ENCODE measurements at regions of chr14 and their contacts with region 1.

Region 1: DNA sequence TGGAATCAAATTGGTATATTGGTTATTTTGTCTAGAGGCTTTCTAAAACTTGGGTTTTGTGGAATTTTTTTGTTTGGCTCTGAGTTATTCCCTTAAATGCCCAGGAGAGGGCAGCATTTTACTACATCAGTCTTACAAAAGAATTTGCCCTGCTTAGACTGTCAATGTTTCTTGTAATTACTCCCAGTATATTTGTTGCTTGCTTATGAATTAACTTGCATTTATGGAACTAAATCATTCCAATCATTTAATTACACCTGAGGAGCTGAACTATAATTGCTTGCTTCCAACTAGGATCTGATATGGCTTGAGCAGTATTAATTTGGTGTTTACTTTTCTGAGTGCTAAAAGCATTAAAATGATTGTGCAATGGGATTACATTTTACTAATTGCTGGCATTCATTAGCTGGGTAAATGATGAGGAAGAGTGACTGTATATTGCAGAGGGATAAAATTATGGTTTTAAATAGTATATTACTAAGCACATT is 48.7 kb downstream of the MIPOL1 start:
- DNase-seq: peak; percentile 79
- ATAC-seq: peak; percentile 65
- H3K4me3 ChIP-seq: no peak overlapping the region
- H3K27ac ChIP-seq: no peak overlapping the region
- H3K4me1 ChIP-seq: no peaks in the 10 kb centered on the region; the same call in 1 of the 2 replicates
- H3K27me3 ChIP-seq: no peaks in the 10 kb centered on the region
- CTCF ChIP-seq: peak; percentile 89

Region 2: DNA sequence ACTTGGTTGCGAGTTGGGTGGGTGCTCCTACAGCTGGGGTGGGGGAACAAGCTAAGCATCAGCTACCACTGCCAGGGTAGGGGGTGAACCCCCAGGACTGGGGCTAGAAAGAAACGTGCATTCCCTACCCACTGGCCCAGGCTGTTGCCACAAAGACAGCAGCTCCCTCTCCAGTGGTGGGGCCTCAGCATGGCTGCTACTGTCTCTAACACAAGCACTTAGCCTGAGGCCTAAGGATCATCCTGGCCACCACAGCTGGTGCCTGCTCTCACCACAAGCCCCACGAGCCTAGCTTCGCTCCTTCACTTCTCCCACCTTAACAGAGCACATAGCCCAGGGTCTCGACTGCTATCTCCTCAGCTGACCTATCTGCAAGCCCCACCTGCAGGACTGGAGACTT is 93.0 kb before region 1 on chr14:
- CTCF ChIA-PET with region 1: no interaction called
- POLR2A ChIA-PET with region 1: no interaction called
- intact Hi-C with region 1: no loop called
- DNase-seq: no peak
- ATAC-seq: no peak
- H3K4me3 ChIP-seq: no peak overlapping the region
- H3K27ac ChIP-seq: no peak overlapping the region
- H3K4me1 ChIP-seq: no peaks in the 10 kb centered on the region
- H3K27me3 ChIP-seq: no peaks in the 10 kb centered on the region
- CTCF ChIP-seq: no peak

Region 3: GRCh38 chr14:37329189-37330001 is 82.9 kb after region 1 on chr14:
- CTCF ChIA-PET with region 1: no interaction called
- POLR2A ChIA-PET with region 1: interaction called, 3 read pairs
- intact Hi-C with region 1: loop called (anchors 2 kb)
- DNase-seq: peak; percentile 64
- ATAC-seq: peak; percentile 80
- H3K4me3 ChIP-seq: no peak overlapping the region
- H3K27ac ChIP-seq: peak overlapping the region; percentile 58
- H3K4me1 ChIP-seq: peaks cover 18% of the 10 kb centered on the region
- H3K27me3 ChIP-seq: no peaks in the 10 kb centered on the region
- CTCF ChIP-seq: no peak

Region 4: GRCh38 chr14:37565550-37565949 is 319.1 kb after region 1 on chr14:
- CTCF ChIA-PET with region 1: no interaction called
- POLR2A ChIA-PET with region 1: no interaction called
- intact Hi-C with region 1: loop called (anchors 1 kb)
- DNase-seq: peak; percentile 59
- ATAC-seq: peak; percentile 6; the same call in 1 of the 2 replicates
- H3K4me3 ChIP-seq: peak overlapping the region; percentile 60
- H3K27ac ChIP-seq: peak overlapping the region; percentile 91
- H3K4me1 ChIP-seq: peaks cover 59% of the 10 kb centered on the region
- H3K27me3 ChIP-seq: no peaks in the 10 kb centered on the region
- CTCF ChIP-seq: peak; percentile 95

Region 5: DNA sequence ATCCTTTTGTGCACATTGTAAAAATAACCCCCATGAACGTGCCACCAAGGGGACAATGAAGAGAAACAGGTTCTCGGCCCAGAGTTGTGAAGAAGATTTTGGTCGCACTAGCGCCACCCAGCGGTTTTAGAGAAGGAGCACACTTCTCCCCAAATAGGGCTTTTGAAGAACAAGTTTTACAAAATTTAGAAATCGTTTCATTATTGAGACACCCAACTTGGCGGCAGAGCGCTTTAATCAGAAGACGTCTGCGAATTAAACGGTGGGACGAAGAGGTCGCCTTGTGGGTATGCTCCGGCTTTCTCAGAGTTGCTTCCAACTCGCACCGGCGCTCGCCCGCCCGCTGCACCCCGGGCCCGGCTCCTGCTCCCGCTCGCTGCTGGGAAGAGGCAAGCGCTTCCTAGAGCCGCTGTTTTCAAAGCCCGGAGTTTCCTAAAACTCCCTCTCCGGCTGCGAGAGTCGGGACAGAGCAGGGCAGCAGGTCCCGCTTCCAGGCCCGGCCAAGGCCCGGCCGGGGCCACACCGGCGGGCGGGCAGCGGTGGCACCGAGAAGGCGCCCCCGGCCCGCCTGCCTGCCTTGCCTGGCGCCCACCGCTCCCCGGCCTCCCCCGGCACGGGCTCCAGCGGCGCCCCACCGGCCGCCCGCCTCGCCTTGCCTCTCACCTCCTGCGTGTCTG is 347.9 kb after region 1 on chr14:
- CTCF ChIA-PET with region 1: interaction called, 4 read pairs
- POLR2A ChIA-PET with region 1: interaction called, 3 read pairs
- intact Hi-C with region 1: loop called (anchors 1 kb)
- DNase-seq: peak; percentile 92
- ATAC-seq: no peak
- H3K4me3 ChIP-seq: peak overlapping the region; percentile 96
- H3K27ac ChIP-seq: peak overlapping the region; percentile 99
- H3K4me1 ChIP-seq: peaks cover 28% of the 10 kb centered on the region
- H3K27me3 ChIP-seq: no peaks in the 10 kb centered on the region
- CTCF ChIP-seq: peak; percentile 92

Region 6: GRCh38 chr14:37709419-37710195 is 463.1 kb after region 1 on chr14:
- CTCF ChIA-PET with region 1: no interaction called
- POLR2A ChIA-PET with region 1: no interaction called
- intact Hi-C with region 1: loop called (anchors 5 kb)
- DNase-seq: peak; percentile 63
- ATAC-seq: no peak
- H3K4me3 ChIP-seq: no peak overlapping the region
- H3K27ac ChIP-seq: no peak overlapping the region
- H3K4me1 ChIP-seq: peaks cover 20% of the 10 kb centered on the region
- H3K27me3 ChIP-seq: no peaks in the 10 kb centered on the region
- CTCF ChIP-seq: peak; percentile 62

Region 7: GRCh38 chr14:37824939-37825712 is 578.7 kb after region 1 on chr14:
- CTCF ChIA-PET with region 1: no interaction called
- POLR2A ChIA-PET with region 1: no interaction called
- intact Hi-C with region 1: loop called (anchors 2 kb)
- DNase-seq: peak; percentile 55
- ATAC-seq: peak; percentile 66
- H3K4me3 ChIP-seq: no peak overlapping the region
- H3K27ac ChIP-seq: peak overlapping the region; percentile 10
- H3K4me1 ChIP-seq: peaks cover 33% of the 10 kb centered on the region
- H3K27me3 ChIP-seq: no peaks in the 10 kb centered on the region
- CTCF ChIP-seq: no peak

Region 8: DNA sequence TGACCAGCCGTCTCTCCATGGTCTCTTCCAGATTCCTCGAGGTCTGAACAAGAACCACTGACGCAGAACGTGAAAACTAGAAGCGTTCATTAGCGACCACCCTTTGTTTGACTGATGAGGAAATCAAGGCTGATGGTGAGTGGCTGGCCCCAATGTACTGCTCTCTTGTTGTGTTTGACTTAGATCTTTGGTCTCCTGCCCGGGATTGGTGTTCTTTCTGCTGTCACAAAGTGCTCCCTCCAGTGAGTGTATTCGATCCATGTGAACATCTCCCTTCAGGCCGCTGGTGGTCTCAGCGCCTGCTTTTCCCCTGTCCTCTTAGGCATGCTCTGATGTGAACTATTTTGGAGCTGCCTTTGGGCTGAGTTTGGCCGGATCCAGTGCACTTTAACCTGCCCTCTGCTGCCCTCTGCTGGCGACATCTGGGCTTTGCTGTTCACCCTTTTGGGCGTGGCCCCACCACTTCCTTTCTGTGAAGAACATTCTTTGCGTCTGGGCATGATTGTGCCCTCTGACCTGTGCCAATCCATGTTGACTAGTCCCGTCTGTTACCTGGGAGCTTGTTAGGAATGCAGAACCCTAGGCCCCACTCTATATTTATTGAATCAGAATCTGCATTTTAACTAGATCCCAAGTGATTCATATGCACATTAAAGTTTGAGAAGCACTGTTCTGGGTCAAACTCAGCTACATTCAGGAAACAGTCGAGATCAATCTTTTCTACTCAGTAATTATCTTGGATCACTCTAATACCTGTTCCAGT is 628.1 kb after region 1 on chr14:
- CTCF ChIA-PET with region 1: no interaction called
- POLR2A ChIA-PET with region 1: no interaction called
- intact Hi-C with region 1: loop called (anchors 1 kb)
- DNase-seq: peak; percentile 92
- ATAC-seq: peak; percentile 90
- H3K4me3 ChIP-seq: no peak overlapping the region
- H3K27ac ChIP-seq: no peak overlapping the region
- H3K4me1 ChIP-seq: peaks cover 17% of the 10 kb centered on the region; the same call in 1 of the 2 replicates
- H3K27me3 ChIP-seq: no peaks in the 10 kb centered on the region
- CTCF ChIP-seq: peak; percentile 95

Measured in PC-3 (cell line).